ENCODE measurements at regions of chr10 and their contacts with region 1.

Region 1: DNA sequence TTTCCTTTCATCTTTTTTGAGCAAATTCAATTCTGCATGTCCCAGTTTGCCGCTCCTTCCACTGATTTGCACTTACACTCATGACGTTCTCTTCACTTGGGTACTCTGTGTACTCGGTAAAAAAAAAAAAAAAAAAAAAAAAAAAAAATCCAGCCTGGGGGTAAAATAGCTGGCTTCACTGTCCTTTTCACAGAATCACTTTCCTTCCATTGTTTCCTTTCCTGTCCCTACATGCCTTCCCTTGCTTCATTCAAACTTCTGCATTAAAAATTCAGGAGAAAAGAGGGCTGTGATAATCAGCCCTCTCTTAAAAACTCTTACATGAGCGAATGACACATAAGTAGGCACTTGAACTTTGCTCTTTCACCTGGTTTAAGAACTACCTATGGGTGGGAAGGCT is 8.7 kb downstream of the ANKRD1 start:
- DNase-seq: peak; percentile 60
- H3K4me3 ChIP-seq: peak overlapping the region in 1 of 3 experiments; percentile 3
- H3K27ac ChIP-seq: peak overlapping the region; percentile 30
- H3K4me1 ChIP-seq: peaks cover 14% of the 10 kb centered on the region
- H3K27me3 ChIP-seq: no peaks in the 10 kb centered on the region
- CTCF ChIP-seq: no peak

Region 2: GRCh38 chr10:90871766-90872647 is 40.2 kb before region 1 on chr10 and contains the start of gene RPP30:
- CTCF ChIA-PET with region 1: no interaction called
- dilution Hi-C with region 1: no loop called
- in situ Hi-C with region 1: no loop called
- intact Hi-C with region 1: no loop called
- DNase-seq: peak; percentile 86
- H3K4me3 ChIP-seq: peak within 1 kb of the TSS; percentile 80 to 94 (median 89)
- H3K27ac ChIP-seq: peak within 1 kb of the TSS; percentile 72
- H3K4me1 ChIP-seq: peaks cover 20% of the 10 kb centered on the region
- H3K27me3 ChIP-seq: no peaks in the 10 kb centered on the region
- CTCF ChIP-seq: no peak
- total RNA-seq, gene RPP30: 32.3 to 38.8 TPM

Region 3: GRCh38 chr10:90960355-90960814 is 48.2 kb after region 1 on chr10:
- CTCF ChIA-PET with region 1: no interaction called
- dilution Hi-C with region 1: loop called (anchors 5 kb)
- in situ Hi-C with region 1: no loop called
- intact Hi-C with region 1: no loop called
- DNase-seq: peak; percentile 78
- H3K4me3 ChIP-seq: no peak overlapping the region
- H3K27ac ChIP-seq: no peak overlapping the region
- H3K4me1 ChIP-seq: peaks cover 14% of the 10 kb centered on the region
- H3K27me3 ChIP-seq: no peaks in the 10 kb centered on the region
- CTCF ChIP-seq: peak in 1 of 2 donors; percentile 13

Region 4: DNA sequence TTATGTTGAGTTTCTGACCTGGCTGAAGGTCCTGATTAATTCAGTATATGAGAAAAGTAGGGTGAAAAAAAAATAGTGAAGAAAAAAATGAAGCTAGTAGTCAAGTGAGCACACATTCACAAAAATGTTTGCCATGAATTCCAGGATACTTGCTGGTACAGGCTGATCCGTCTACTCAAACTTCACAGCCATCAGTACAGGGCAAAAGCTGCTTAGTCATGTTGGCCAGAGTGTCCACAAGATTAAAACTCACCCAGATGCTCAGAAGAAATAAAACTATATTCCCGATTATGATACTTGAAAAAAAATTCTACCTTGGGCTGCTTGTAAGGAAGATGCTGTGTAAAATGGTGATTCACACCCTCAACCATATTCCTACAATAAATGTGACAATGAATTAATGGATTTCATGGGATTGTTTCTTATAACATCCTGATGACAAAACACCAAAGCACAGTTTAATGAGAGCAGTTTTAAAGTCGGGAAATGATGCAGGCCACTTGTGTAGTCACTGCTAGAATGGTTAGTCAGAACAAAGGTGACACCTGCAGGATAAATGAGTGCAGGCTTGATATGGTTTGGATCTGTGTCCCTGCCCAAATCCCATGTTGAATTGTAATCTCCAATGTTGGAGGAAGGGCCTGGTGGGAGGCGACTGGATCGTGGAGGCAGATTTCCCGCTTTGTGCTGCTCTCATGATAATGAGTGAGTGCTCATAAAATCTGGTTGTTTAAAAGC is 57.9 kb after region 1 on chr10:
- CTCF ChIA-PET with region 1: no interaction called
- dilution Hi-C with region 1: no loop called
- in situ Hi-C with region 1: no loop called
- intact Hi-C with region 1: loop called (anchors 1 kb)
- DNase-seq: peak; percentile 48
- H3K4me3 ChIP-seq: no peak overlapping the region
- H3K27ac ChIP-seq: no peak overlapping the region
- H3K4me1 ChIP-seq: peaks cover 19% of the 10 kb centered on the region
- H3K27me3 ChIP-seq: no peaks in the 10 kb centered on the region
- CTCF ChIP-seq: peak; percentile 23 to 41

Region 5: GRCh38 chr10:90983914-90984549 is 71.9 kb after region 1 on chr10:
- CTCF ChIA-PET with region 1: no interaction called
- dilution Hi-C with region 1: no loop called
- in situ Hi-C with region 1: no loop called
- intact Hi-C with region 1: no loop called
- DNase-seq: no peak
- H3K4me3 ChIP-seq: no peak overlapping the region
- H3K27ac ChIP-seq: no peak overlapping the region
- H3K4me1 ChIP-seq: no peaks in the 10 kb centered on the region
- H3K27me3 ChIP-seq: peaks cover 2% of the 10 kb centered on the region
- CTCF ChIP-seq: no peak

Region 6: DNA sequence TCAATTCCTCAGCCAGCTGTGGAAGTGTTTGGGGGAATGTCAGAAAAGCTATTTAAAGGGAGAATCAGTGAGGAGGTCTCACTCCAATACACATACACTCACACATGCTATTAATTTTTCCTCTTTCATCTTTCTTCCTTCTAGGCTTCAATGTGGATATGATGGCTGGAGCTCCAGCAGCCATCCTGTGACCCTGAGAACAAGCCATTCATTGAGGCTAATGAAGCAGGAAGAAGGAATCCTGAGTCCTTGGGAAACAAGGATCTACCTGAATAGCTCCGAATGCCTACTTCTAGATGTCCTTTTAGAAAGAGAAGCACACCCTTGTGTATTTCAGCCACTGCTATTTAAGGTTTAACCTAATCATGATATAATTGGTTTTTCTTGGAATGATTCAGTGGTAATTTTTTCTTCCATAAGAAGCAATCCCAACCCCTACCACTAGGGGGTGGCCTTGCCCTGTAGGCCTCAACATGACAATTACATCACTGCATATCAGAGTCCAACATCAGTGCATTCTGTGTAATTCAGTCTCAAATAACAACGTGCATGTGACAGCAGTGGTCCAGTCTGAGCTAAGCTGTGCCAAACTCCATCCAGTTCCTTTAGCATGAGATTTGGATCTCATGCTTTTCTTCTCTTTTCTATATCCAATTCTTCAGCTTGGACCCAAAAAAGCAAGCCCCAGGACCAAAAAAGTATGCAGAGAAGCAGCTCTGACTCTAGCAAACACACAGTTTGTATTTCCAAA is 94.0 kb after region 1 on chr10:
- CTCF ChIA-PET with region 1: interaction called, 3 read pairs
- dilution Hi-C with region 1: no loop called
- in situ Hi-C with region 1: no loop called
- intact Hi-C with region 1: loop called (anchors 2 kb)
- DNase-seq: peak; percentile 50
- H3K4me3 ChIP-seq: no peak overlapping the region
- H3K27ac ChIP-seq: no peak overlapping the region
- H3K4me1 ChIP-seq: no peaks in the 10 kb centered on the region
- H3K27me3 ChIP-seq: no peaks in the 10 kb centered on the region
- CTCF ChIP-seq: peak; percentile 97 to 99

Region 7: GRCh38 chr10:91022924-91023699 is 110.9 kb after region 1 on chr10:
- CTCF ChIA-PET with region 1: no interaction called
- dilution Hi-C with region 1: no loop called
- in situ Hi-C with region 1: no loop called
- intact Hi-C with region 1: no loop called
- DNase-seq: peak; percentile 33
- H3K4me3 ChIP-seq: no peak overlapping the region
- H3K27ac ChIP-seq: no peak overlapping the region
- H3K4me1 ChIP-seq: no peaks in the 10 kb centered on the region
- H3K27me3 ChIP-seq: no peaks in the 10 kb centered on the region
- CTCF ChIP-seq: no peak

Region 8: DNA sequence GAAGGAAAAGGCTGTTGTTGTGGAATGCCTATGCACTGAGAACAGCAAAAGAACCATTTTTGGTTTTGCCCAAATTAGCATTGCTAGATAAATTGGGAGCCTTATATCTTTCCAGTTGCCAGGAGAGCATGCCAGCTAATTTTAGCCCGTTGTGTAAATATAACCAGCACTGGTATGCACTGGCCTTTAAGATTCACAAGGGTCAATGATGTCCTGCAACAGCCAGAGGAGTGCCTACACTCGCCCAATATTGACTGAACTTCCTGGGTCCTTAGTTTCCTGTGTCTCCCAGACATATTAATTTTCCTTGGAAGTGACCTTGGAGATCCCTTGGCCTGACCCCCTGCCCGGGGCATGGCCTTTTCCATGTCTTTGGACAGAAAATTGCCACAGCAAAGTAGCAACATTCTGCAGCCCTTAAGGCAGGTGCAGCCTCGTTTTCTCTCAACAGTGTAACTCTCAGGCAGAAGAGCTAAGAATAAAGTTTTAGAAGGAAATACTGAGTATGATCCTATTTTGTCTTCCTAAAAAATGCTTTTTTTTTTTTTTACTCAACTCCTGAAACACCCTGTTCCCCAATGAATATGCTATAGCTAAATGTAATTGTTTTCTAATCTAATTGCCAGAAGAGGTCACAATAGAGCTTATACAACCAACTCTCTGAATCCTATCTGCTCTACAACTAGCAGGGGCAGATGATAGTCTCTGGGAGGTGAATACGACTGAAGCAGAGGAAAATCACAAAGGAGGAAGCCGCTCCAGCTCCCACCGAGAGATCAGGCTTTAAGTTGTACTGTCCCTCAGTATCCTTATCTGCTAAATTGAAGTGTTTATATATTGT is 176.3 kb after region 1 on chr10:
- CTCF ChIA-PET with region 1: interaction called, 13 read pairs
- dilution Hi-C with region 1: no loop called
- in situ Hi-C with region 1: no loop called
- intact Hi-C with region 1: loop called (anchors 2 kb)
- DNase-seq: peak; percentile 4
- H3K4me3 ChIP-seq: no peak overlapping the region
- H3K27ac ChIP-seq: no peak overlapping the region
- H3K4me1 ChIP-seq: no peaks in the 10 kb centered on the region
- H3K27me3 ChIP-seq: no peaks in the 10 kb centered on the region
- CTCF ChIP-seq: peak in 1 of 2 donors; percentile 34

Region 9: GRCh38 chr10:91206427-91206826 is 294.3 kb after region 1 on chr10:
- CTCF ChIA-PET with region 1: no interaction called
- dilution Hi-C with region 1: no loop called
- in situ Hi-C with region 1: no loop called
- intact Hi-C with region 1: loop called (anchors 5 kb)
- DNase-seq: no peak
- H3K4me3 ChIP-seq: no peak overlapping the region
- H3K27ac ChIP-seq: no peak overlapping the region
- H3K4me1 ChIP-seq: no peaks in the 10 kb centered on the region
- H3K27me3 ChIP-seq: no peaks in the 10 kb centered on the region
- CTCF ChIP-seq: no peak

Region 10: DNA sequence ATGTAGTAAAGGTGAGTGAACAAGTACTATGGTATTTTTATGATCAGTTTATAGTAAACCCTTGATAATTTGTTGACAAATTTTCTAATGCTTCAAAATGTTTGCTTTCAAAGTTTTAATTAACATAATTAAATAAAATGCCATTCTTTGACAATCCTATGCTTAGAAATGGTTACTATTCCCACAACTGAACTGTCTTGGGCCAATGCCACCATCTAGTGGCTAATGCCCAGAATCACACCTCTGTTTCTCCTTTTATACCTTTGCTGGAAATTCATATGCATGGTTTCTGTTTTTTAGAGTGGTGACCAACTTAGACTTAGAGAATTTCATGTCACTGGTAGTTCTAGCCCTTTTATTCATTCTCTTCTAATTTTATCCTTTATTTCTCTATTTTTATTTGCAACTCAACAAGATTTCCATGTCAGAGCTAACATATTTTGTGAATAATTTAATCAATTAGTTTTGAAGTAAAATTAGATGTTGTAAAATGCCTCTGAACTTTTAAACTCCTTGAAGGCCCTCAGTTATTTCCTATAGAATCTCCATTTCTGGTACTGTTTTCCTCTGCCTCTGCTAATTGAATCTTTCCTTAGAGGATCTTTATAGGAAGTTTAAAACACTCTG is 339.4 kb after region 1 on chr10:
- CTCF ChIA-PET with region 1: interaction called, 3 read pairs
- dilution Hi-C with region 1: no loop called
- in situ Hi-C with region 1: loop called (anchors 10 kb)
- intact Hi-C with region 1: loop called (anchors 1 kb)
- DNase-seq: peak; percentile 35
- H3K4me3 ChIP-seq: no peak overlapping the region
- H3K27ac ChIP-seq: no peak overlapping the region
- H3K4me1 ChIP-seq: no peaks in the 10 kb centered on the region
- H3K27me3 ChIP-seq: no peaks in the 10 kb centered on the region
- CTCF ChIP-seq: peak; percentile 86 to 94

Measured in mammary epithelial cell (primary cell).